B cell (primary cell): ENCODE measurements at regions of chr20 and their contacts with region 1.

Region 1: GRCh38 chr20:1466211-1467081 is at the start of gene NSFL1C:
- DNase-seq: peak; percentile 97
- ATAC-seq: peak; percentile 92
- H3K4me3 ChIP-seq: peak within 1 kb of the TSS; percentile 69 to 92 (median 90)
- H3K4me3 Mint-ChIP-seq: peak within 1 kb of the TSS; percentile 90
- H3K27ac ChIP-seq: peak within 1 kb of the TSS; percentile 79 to 92
- H3K27ac Mint-ChIP-seq: peak within 1 kb of the TSS; percentile 93
- H3K4me1 ChIP-seq: peaks cover 49 to 54% of the 10 kb centered on the region in 2 donors
- H3K4me1 Mint-ChIP-seq: peaks cover 69% of the 10 kb centered on the region
- H3K27me3 ChIP-seq: no peaks in the 10 kb centered on the region
- H3K27me3 Mint-ChIP-seq: no peaks in the 10 kb centered on the region
- CTCF ChIP-seq: peak; percentile 100
- total RNA-seq, gene NSFL1C: 80.3 and 84.0 TPM in 2 replicates

Region 2: DNA sequence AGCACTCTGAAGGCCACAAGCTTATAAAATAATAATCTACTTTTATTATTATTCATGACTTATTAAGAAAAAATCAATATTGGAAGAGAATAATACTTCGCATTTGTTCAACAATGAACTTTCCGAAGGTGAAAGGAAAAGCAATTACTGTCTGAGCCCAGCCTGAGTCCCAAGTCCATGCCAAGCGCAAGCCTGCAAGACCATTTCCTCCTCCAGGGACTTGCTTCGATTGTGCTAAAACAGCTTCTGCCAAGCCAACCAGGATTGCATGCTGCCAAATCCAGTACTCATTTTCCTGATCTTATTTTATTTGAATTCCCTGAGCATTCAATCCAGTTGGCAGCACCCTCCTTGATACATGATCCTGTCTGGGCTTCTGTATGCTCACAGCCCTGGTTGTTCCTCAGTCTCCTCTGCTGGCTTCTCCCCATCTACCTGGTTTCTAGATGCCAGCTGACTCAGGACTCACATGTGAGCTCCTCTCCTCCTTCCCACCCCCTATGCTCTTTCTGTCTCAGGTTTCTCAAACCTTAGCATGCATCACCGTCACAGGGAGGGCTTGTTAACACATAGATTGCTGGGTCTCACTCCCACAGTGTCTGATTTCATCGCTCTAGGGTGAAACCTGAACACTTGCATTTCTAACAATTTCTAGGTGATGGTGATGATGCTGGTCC is 404.0 kb before region 1 on chr20:
- CTCF ChIA-PET with region 1: no interaction called
- POLR2A ChIA-PET with region 1: no interaction called
- intact Hi-C with region 1: no loop called
- DNase-seq: no peak
- ATAC-seq: no peak
- H3K4me3 ChIP-seq: no peak overlapping the region
- H3K4me3 Mint-ChIP-seq: no peak overlapping the region
- H3K27ac ChIP-seq: no peak overlapping the region
- H3K27ac Mint-ChIP-seq: no peak overlapping the region
- H3K4me1 ChIP-seq: no peaks in the 10 kb centered on the region
- H3K4me1 Mint-ChIP-seq: no peaks in the 10 kb centered on the region
- H3K27me3 ChIP-seq: no peaks in the 10 kb centered on the region
- H3K27me3 Mint-ChIP-seq: peaks cover 12% of the 10 kb centered on the region
- CTCF ChIP-seq: no peak

Region 3: GRCh38 chr20:1118336-1119127 is 347.9 kb before region 1 on chr20 and contains the start of gene PSMF1:
- CTCF ChIA-PET with region 1: no interaction called
- POLR2A ChIA-PET with region 1: no interaction called
- intact Hi-C with region 1: loop called (anchors 1 kb)
- DNase-seq: peak; percentile 97
- ATAC-seq: peak; percentile 94
- H3K4me3 ChIP-seq: peak within 1 kb of the TSS; percentile 78 to 97 (median 85)
- H3K4me3 Mint-ChIP-seq: peak within 1 kb of the TSS; percentile 91
- H3K27ac ChIP-seq: peak within 1 kb of the TSS; percentile 70 to 91
- H3K27ac Mint-ChIP-seq: peak within 1 kb of the TSS; percentile 93
- H3K4me1 ChIP-seq: peaks cover 42 to 53% of the 10 kb centered on the region in 2 donors
- H3K4me1 Mint-ChIP-seq: peaks cover 62% of the 10 kb centered on the region
- H3K27me3 ChIP-seq: no peaks in the 10 kb centered on the region
- H3K27me3 Mint-ChIP-seq: no peaks in the 10 kb centered on the region
- CTCF ChIP-seq: no peak
- total RNA-seq, gene PSMF1: 113 and 114 TPM in 2 replicates

Region 4: DNA sequence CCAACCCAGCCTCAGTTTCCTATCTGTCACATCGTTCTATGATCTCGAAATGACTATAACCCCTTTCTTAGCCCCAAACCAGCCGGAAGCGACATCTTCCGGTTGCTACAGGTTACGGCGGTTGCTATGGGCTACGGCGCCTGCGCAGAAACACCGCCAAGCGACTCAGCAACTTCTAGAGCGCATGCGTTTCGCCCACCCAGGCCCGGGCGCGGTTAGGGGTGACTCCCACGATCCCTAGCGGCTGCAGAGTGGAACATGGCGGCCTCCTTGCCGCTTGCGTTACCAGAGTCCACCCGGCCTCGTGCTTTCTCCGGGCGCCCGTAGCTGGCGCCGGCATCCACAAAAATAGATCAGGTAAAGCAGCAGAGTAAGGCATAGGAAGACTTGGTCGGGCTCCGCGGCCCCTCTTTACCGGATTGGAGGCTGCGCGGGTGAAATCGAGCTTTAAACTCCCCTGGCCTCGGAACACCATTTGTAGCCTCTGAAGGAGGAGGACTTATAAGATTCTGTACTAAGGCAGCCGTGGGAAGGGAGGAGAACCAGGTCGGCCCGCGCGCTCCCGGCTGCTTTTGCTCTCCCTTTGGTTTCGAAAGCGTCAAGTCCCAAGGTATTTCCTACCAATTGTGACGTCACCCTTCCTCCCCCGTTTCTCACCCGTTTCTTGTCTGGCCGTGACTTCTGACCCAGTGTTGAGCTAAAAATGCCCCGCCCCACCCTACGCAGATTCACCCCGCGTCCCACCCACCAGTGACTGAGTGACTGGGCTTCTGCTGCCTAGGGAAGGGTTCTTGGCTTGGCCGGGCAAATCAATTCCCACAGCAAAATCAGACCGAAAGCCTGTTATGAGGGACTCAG is 141.0 kb before region 1 on chr20:
- CTCF ChIA-PET with region 1: interaction called, 6 read pairs
- POLR2A ChIA-PET with region 1: no interaction called
- intact Hi-C with region 1: loop called (anchors 1 kb)
- DNase-seq: peak; percentile 99
- ATAC-seq: peak; percentile 89
- H3K4me3 ChIP-seq: peak overlapping the region; percentile 75 to 99 (median 93)
- H3K4me3 Mint-ChIP-seq: no peak overlapping the region
- H3K27ac ChIP-seq: peak overlapping the region; percentile 92 to 98
- H3K27ac Mint-ChIP-seq: no peak overlapping the region
- H3K4me1 ChIP-seq: peaks cover 27 to 28% of the 10 kb centered on the region in 2 donors
- H3K4me1 Mint-ChIP-seq: peaks cover 31% of the 10 kb centered on the region
- H3K27me3 ChIP-seq: no peaks in the 10 kb centered on the region
- H3K27me3 Mint-ChIP-seq: no peaks in the 10 kb centered on the region
- CTCF ChIP-seq: no peak

Region 5: GRCh38 chr20:1405801-1406200 is 60.6 kb before region 1 on chr20:
- CTCF ChIA-PET with region 1: no interaction called
- POLR2A ChIA-PET with region 1: no interaction called
- intact Hi-C with region 1: no loop called
- DNase-seq: no peak
- ATAC-seq: no peak
- H3K4me3 ChIP-seq: no peak overlapping the region
- H3K4me3 Mint-ChIP-seq: no peak overlapping the region
- H3K27ac ChIP-seq: no peak overlapping the region
- H3K27ac Mint-ChIP-seq: no peak overlapping the region
- H3K4me1 ChIP-seq: no peaks in the 10 kb centered on the region
- H3K4me1 Mint-ChIP-seq: no peaks in the 10 kb centered on the region
- H3K27me3 ChIP-seq: peaks cover 0 to 11% (median 0%) of the 10 kb centered on the region in 4 experiments
- H3K27me3 Mint-ChIP-seq: peaks cover 30% of the 10 kb centered on the region
- CTCF ChIP-seq: no peak

Region 6: GRCh38 chr20:1437235-1437904 is 29.1 kb before region 1 on chr20:
- CTCF ChIA-PET with region 1: interaction called, 37 read pairs
- POLR2A ChIA-PET with region 1: interaction called, 6 read pairs
- intact Hi-C with region 1: loop called (anchors 2 kb)
- DNase-seq: peak; percentile 83
- ATAC-seq: peak; percentile 51
- H3K4me3 ChIP-seq: no peak overlapping the region
- H3K4me3 Mint-ChIP-seq: no peak overlapping the region
- H3K27ac ChIP-seq: no peak overlapping the region
- H3K27ac Mint-ChIP-seq: peak overlapping the region; percentile 50
- H3K4me1 ChIP-seq: peaks cover 20 to 23% of the 10 kb centered on the region in 2 donors
- H3K4me1 Mint-ChIP-seq: peaks cover 35% of the 10 kb centered on the region
- H3K27me3 ChIP-seq: no peaks in the 10 kb centered on the region
- H3K27me3 Mint-ChIP-seq: peaks cover 3% of the 10 kb centered on the region
- CTCF ChIP-seq: peak; percentile 89

Region 7: GRCh38 chr20:1851396-1851795 is 384.9 kb after region 1 on chr20:
- CTCF ChIA-PET with region 1: no interaction called
- POLR2A ChIA-PET with region 1: no interaction called
- intact Hi-C with region 1: loop called (anchors 2 kb)
- DNase-seq: no peak
- ATAC-seq: no peak
- H3K4me3 ChIP-seq: peak overlapping the region in 1 of 5 experiments; percentile 26
- H3K4me3 Mint-ChIP-seq: peak overlapping the region; percentile 76
- H3K27ac ChIP-seq: peak overlapping the region; percentile 61 to 72
- H3K27ac Mint-ChIP-seq: peak overlapping the region; percentile 92
- H3K4me1 ChIP-seq: peaks cover 35 to 51% of the 10 kb centered on the region in 2 donors
- H3K4me1 Mint-ChIP-seq: peaks cover 61% of the 10 kb centered on the region
- H3K27me3 ChIP-seq: no peaks in the 10 kb centered on the region
- H3K27me3 Mint-ChIP-seq: no peaks in the 10 kb centered on the region
- CTCF ChIP-seq: no peak

Region 8: GRCh38 chr20:2470423-2471193 is 1004.2 kb after region 1 on chr20 and contains the start of gene SNRPB:
- CTCF ChIA-PET with region 1: no interaction called
- POLR2A ChIA-PET with region 1: interaction called, 7 read pairs
- intact Hi-C with region 1: loop called (anchors 10 kb)
- DNase-seq: peak; percentile 98
- ATAC-seq: peak; percentile 94
- H3K4me3 ChIP-seq: peak within 1 kb of the TSS; percentile 74 to 98 (median 91)
- H3K4me3 Mint-ChIP-seq: peak within 1 kb of the TSS; percentile 99
- H3K27ac ChIP-seq: peak within 1 kb of the TSS; percentile 96 to 98
- H3K27ac Mint-ChIP-seq: peak within 1 kb of the TSS; percentile 100
- H3K4me1 ChIP-seq: peaks cover 19 to 20% of the 10 kb centered on the region in 2 donors
- H3K4me1 Mint-ChIP-seq: peaks cover 37% of the 10 kb centered on the region
- H3K27me3 ChIP-seq: no peaks in the 10 kb centered on the region
- H3K27me3 Mint-ChIP-seq: no peaks in the 10 kb centered on the region
- CTCF ChIP-seq: no peak
- total RNA-seq, gene SNRPB: 117 and 123 TPM in 2 replicates